Activated naive CD4-positive, alpha-beta T cell treated with anti-CD3 and anti-CD28 coated beads for 36 hours (primary cell): ENCODE measurements at regions of chr5 and their contacts with region 1.

Region 1: GRCh38 chr5:60972231-60972630 is 27.2 kb downstream of the NDUFAF2 start:
- DNase-seq: peak; percentile 78
- H3K4me3 Mint-ChIP-seq: no peak overlapping the region
- H3K27ac Mint-ChIP-seq: peak overlapping the region; percentile 11
- H3K4me1 Mint-ChIP-seq: peaks cover 26% of the 10 kb centered on the region
- H3K27me3 Mint-ChIP-seq: no peaks in the 10 kb centered on the region

Region 2: GRCh38 chr5:60959156-60959555 is 13.1 kb before region 1 on chr5:
- CTCF ChIA-PET with region 1: interaction called, 5 read pairs
- intact Hi-C with region 1: loop called (anchors 1 kb)
- DNase-seq: no peak
- H3K4me3 Mint-ChIP-seq: no peak overlapping the region
- H3K27ac Mint-ChIP-seq: no peak overlapping the region
- H3K4me1 Mint-ChIP-seq: peaks cover 6% of the 10 kb centered on the region
- H3K27me3 Mint-ChIP-seq: no peaks in the 10 kb centered on the region

Region 3: DNA sequence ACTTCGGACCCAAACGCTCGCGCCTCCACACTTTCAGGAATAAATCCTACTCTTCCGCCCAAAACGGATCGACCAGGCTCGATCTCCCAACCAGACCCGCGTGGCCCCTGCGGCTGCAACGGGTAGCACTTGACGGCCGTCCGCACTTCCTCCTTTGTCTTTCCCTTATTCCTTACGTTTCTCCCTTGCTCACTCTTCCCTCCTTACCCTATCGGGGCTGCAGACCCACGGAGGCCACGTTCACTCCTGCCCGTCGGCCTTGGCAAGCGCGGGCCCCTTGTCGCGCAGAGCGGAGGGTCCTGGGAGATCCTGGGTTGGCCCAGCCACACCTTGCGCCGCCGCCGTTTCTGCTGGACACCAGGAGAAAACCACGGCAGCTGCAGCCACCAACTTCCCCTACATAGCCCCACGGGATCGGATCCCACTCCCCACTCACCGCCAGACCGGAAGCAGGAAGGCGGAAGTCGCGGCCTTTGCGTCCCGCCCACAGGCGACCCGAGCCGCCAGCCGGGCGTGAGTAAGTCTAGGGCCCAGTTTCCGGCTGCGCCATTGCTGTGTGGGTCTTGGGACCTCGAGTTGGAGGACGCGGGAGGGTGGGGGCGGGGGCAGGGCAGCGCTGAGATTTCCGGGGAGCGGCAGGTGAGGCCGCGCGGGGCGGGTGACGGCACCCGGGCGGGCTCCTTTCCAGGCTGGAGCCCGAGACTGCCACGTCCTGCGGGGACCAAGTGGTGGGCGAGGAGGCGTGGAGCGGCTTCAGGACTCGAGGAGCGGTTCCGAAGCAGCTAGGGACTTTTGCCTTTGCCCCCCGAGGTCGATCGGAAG is 190.0 kb after region 1 on chr5 and contains the start of gene SMIM15:
- CTCF ChIA-PET with region 1: no interaction called
- intact Hi-C with region 1: loop called (anchors 10 kb)
- DNase-seq: peak; percentile 90
- H3K4me3 Mint-ChIP-seq: peak within 1 kb of the TSS; percentile 97
- H3K27ac Mint-ChIP-seq: peak within 1 kb of the TSS; percentile 95
- H3K4me1 Mint-ChIP-seq: peaks cover 38% of the 10 kb centered on the region
- H3K27me3 Mint-ChIP-seq: no peaks in the 10 kb centered on the region
- total RNA-seq, gene SMIM15: 45.8 to 48.1 TPM

Region 4: DNA sequence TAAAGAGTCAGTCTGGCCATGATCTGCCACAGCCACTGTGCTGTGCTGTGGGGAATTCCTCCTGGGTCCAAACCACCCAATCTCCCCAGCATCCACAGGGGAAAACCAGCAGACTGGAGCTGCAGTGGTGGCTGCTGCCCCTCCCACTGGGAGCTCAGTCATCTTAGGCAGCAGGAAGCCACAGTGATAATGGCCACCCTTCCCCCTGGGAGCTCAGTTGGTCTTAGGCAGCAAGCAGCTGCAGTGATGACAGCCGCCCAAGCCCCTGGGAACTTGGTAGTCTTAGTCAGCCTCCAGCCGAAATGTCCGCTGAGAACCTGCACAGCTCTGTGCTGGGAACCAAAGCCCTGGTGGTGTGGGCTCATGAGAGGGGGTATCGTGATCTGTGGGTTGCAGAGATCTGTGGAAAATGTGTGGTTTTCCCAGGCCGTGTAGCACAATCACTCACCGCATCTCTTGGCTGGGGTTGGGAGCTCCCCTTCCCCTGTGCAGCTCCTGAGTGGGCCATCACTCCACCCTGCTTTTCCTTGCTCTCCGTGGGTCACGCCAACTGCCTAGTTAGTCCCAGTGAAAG is 228.4 kb after region 1 on chr5:
- CTCF ChIA-PET with region 1: no interaction called
- intact Hi-C with region 1: loop called (anchors 1 kb)
- DNase-seq: no peak
- H3K4me3 Mint-ChIP-seq: no peak overlapping the region
- H3K27ac Mint-ChIP-seq: no peak overlapping the region
- H3K4me1 Mint-ChIP-seq: peaks cover 7% of the 10 kb centered on the region
- H3K27me3 Mint-ChIP-seq: peaks cover 37% of the 10 kb centered on the region

Region 5: DNA sequence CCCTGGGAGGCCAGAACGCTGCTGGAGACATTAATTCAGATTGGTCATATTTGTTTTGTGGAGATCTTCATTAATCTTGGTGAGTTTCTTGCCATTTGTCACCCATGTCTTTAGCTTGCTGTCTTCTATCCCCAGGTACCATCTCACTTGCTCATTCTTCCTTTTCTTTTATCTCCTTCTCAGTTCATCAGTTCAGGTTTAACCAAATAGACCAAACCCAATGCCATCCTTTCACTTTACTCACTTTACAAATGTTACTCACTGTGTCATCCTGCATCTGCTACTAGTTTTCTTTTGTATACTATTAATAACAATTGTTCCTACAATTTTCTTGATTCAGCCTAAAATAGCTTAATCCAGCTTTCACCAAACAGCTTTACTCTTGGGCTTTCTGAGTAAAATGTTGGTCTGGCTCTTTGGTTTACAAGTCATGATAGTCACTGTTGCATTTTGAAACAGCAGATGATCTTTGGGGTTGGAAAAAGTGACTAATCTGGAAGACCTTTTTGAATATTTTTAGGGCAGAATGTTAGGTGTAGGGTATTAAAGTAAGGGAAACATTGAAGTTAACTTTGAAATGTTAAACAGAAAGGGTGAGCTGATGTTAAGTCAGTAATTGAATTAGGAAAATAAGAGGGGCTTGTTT is 606.8 kb after region 1 on chr5:
- CTCF ChIA-PET with region 1: no interaction called
- intact Hi-C with region 1: loop called (anchors 1 kb)
- DNase-seq: no peak
- H3K4me3 Mint-ChIP-seq: no peak overlapping the region
- H3K27ac Mint-ChIP-seq: no peak overlapping the region
- H3K4me1 Mint-ChIP-seq: no peaks in the 10 kb centered on the region
- H3K27me3 Mint-ChIP-seq: peaks cover 3% of the 10 kb centered on the region